WTC11 (cell line): ENCODE measurements at regions of chrX and their contacts with region 1.

Region 1: DNA sequence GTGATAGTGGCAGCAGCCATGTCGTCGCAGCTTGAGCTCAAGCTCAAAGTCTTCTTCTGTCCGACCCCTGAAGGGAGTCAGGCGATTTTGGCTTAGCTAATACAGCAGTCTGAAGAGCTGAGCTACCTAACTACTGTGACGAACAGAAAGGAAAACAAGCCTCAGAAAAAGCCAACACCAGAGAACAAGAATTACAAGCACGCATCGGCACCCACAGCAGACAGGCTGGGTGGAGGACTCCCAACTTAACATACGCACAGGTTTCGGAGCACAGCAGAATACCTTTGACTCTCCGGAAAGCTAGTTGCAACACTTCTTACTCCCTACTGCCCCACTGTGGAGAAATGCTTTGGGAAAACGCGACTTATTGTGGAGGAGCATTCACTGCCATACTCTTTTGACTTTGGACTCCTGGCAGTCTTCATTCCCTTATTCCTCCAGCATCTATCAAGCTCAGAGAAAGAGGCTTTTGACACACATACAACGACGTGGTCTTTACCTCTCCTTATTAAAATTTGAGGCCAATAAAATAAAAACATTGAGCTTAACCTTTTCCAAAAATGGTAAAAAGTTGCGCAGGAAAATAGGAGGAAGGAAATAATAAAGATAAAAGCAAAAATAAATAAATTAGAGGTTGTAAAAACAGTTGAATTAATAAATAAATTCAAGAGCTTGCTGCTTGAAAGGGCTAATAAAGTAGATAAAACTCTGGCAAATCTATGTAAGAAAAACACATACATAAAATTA is 41.3 kb upstream of the GPC3 start:
- DNase-seq: peak; percentile 46
- ATAC-seq: peak; percentile 89
- H3K4me3 Mint-ChIP-seq: peak overlapping the region; percentile 58
- H3K27ac Mint-ChIP-seq: no peak overlapping the region
- H3K4me1 Mint-ChIP-seq: peaks cover 12% of the 10 kb centered on the region
- H3K27me3 Mint-ChIP-seq: no peaks in the 10 kb centered on the region
- CTCF ChIP-seq: no peak

Region 2: GRCh38 chrX:133608406-133608805 is 418.3 kb before region 1 on chrX:
- CTCF ChIA-PET with region 1: no interaction called
- POLR2A ChIA-PET with region 1: no interaction called
- DNase-seq: no peak
- ATAC-seq: no peak
- H3K4me3 Mint-ChIP-seq: no peak overlapping the region
- H3K27ac Mint-ChIP-seq: no peak overlapping the region
- H3K4me1 Mint-ChIP-seq: peaks cover 10% of the 10 kb centered on the region
- H3K27me3 Mint-ChIP-seq: no peaks in the 10 kb centered on the region
- CTCF ChIP-seq: no peak

Region 3: GRCh38 chrX:133783274-133783673 is 243.5 kb before region 1 on chrX:
- CTCF ChIA-PET with region 1: interaction called, 10 read pairs
- POLR2A ChIA-PET with region 1: no interaction called
- DNase-seq: no peak
- ATAC-seq: no peak
- H3K4me3 Mint-ChIP-seq: no peak overlapping the region
- H3K27ac Mint-ChIP-seq: peak overlapping the region; percentile 34; the same call in 1 of the 2 replicates
- H3K4me1 Mint-ChIP-seq: peaks cover 49% of the 10 kb centered on the region
- H3K27me3 Mint-ChIP-seq: no peaks in the 10 kb centered on the region
- CTCF ChIP-seq: no peak

Region 4: DNA sequence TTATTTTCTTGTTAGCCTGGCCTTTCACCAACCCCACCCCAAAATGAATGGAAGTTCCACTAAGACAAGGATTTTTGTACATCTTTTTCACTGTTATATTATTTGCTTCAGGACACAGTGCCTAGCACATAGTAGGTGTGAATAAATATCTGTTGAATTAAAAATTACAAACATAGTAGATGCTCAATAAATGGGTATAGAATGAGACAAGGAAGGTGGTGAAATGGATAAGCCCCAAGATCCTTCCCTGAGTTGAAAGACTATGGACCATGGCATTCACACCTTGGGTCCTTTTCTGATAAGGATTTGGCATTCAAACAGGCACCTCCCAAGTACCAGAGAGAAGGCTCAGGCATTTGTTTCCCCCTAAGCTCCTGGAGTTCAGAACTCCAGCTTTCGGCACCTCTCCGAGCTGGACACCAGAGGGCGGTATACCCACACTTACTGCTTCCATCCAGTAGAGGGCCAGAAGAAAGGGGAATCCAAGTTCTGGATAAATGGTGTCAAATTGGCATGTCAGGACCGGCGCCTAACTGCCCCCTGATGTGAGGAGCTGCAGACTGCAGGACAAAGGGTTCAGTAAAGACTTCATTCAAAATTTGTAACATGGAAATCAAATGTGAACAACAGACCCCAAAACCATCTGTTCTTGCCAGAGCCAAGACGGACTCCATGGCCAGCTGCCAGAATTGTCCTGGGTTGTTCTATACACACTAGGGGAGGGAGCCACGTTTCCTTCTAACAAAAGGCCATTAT is 234.4 kb before region 1 on chrX:
- CTCF ChIA-PET with region 1: interaction called, 78 read pairs
- POLR2A ChIA-PET with region 1: no interaction called
- DNase-seq: peak; percentile 73
- ATAC-seq: peak; percentile 83
- H3K4me3 Mint-ChIP-seq: no peak overlapping the region
- H3K27ac Mint-ChIP-seq: no peak overlapping the region
- H3K4me1 Mint-ChIP-seq: peaks cover 20% of the 10 kb centered on the region
- H3K27me3 Mint-ChIP-seq: no peaks in the 10 kb centered on the region
- CTCF ChIP-seq: peak; percentile 86

Region 5: DNA sequence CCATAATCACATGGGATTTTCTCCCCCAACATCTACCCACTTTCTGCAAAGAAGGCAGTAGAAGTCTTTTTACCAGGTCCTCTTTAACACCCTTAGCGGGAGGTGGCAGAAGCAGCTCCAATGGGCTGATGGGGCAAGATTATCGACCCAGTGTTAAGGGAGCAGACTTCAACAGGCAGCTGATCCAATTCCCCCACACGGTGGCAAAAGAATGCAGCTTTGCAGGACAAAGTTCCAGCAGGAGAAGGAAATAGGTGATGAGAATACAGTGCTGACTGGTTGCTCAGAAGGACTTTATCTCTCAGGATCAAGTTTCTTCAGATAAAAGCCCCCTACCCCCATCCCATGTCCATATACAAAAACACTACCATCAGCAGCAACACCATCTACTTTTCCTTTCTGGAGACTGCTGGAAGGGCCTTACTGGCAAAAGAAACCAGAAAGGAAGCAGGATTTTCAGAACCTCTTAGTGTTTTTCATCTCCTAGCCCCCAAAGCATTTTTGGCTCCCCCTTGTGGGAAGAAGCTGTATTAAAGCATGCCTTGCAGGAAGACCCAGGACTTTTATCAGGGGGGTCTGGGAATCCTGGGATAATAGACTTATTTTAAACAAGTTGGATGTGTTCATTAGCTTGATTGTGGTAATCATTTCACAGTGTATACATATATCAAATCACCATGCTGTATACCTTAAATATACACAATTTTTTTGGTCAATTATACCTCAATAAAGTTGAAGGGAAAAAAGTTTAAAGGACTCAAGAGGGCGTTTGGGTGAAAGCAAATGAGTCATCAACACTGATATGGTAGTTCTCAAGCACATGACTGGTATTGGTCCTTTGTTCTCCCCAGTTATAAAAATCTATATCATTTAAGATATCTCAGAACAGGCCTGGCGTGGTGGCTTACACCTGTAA is 187.7 kb before region 1 on chrX:
- CTCF ChIA-PET with region 1: interaction called, 13 read pairs
- POLR2A ChIA-PET with region 1: no interaction called
- DNase-seq: peak; percentile 42
- ATAC-seq: peak; percentile 65
- H3K4me3 Mint-ChIP-seq: no peak overlapping the region
- H3K27ac Mint-ChIP-seq: no peak overlapping the region
- H3K4me1 Mint-ChIP-seq: peaks cover 7% of the 10 kb centered on the region; the same call in 1 of the 2 replicates
- H3K27me3 Mint-ChIP-seq: no peaks in the 10 kb centered on the region
- CTCF ChIP-seq: peak; percentile 56

Region 6: GRCh38 chrX:133921764-133922389 is 104.9 kb before region 1 on chrX:
- CTCF ChIA-PET with region 1: interaction called, 13 read pairs
- POLR2A ChIA-PET with region 1: no interaction called
- DNase-seq: peak; percentile 75
- ATAC-seq: peak; percentile 92
- H3K4me3 Mint-ChIP-seq: no peak overlapping the region
- H3K27ac Mint-ChIP-seq: peak overlapping the region; percentile 76; the same call in 1 of the 2 replicates
- H3K4me1 Mint-ChIP-seq: peaks cover 53% of the 10 kb centered on the region
- H3K27me3 Mint-ChIP-seq: peaks cover 4% of the 10 kb centered on the region; the same call in 1 of the 2 replicates
- CTCF ChIP-seq: peak; percentile 32; the same call in 1 of the 2 replicates

Region 7: GRCh38 chrX:134144231-134144630 is 117.5 kb after region 1 on chrX:
- CTCF ChIA-PET with region 1: interaction called, 12 read pairs
- POLR2A ChIA-PET with region 1: no interaction called
- DNase-seq: no peak
- ATAC-seq: no peak; the same call in 1 of the 2 replicates
- H3K4me3 Mint-ChIP-seq: no peak overlapping the region
- H3K27ac Mint-ChIP-seq: no peak overlapping the region
- H3K4me1 Mint-ChIP-seq: peaks cover 5% of the 10 kb centered on the region
- H3K27me3 Mint-ChIP-seq: no peaks in the 10 kb centered on the region; the same call in 1 of the 2 replicates
- CTCF ChIP-seq: no peak